Colonic mucosa (tissue), 4 donors: ENCODE measurements at regions of chr18 and their contacts with region 1.

Region 1: DNA sequence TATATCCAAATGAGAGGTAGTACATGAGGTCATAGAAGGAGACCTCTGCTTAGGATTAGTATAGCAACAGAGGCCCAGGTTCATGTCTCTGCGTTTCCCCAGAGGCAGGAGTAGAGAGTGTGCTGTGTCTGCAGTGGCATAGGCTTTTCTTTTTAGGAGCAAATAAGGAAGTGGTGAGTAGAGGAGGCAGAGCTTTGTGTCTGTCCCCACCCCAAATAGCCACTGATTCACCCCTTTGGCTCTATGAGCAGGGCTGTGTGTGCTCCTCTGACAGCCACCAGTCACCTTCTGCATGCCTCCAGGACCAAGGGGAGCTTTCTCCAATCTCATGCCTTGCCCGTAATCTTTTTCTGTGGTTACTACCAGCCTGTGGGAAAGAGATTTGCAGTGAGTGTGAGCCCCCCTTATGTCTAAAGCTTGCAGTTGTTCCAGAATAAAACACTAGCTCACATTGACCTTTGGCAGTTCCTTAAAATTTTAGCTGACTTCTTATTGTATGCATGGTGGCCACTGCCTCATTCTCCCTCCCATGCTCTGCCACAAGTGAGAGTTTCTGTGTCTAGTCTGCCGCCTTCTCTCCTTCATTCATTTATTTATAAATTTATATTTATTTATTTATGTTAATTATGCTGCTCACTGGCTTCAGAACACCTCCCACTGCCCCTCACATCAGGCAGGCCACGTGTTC is 23.5 kb upstream of the ELAC1 start:
- DNase-seq: no peak
- H3K4me3 ChIP-seq: no peak overlapping the region
- H3K27ac ChIP-seq: no peak overlapping the region
- H3K4me1 ChIP-seq: no peaks in the 10 kb centered on the region
- H3K27me3 ChIP-seq: no peaks in the 10 kb centered on the region
- CTCF ChIP-seq: no peak

Region 2: GRCh38 chr18:50879302-50880118 is 64.9 kb before region 1 on chr18:
- intact Hi-C with region 1: loop called (anchors 10 kb)
- DNase-seq: peak; percentile 53
- H3K4me3 ChIP-seq: peak overlapping the region; percentile 76
- H3K27ac ChIP-seq: peak overlapping the region; percentile 100
- H3K4me1 ChIP-seq: peaks cover 4% of the 10 kb centered on the region
- H3K27me3 ChIP-seq: no peaks in the 10 kb centered on the region
- CTCF ChIP-seq: no peak

Region 3: GRCh38 chr18:51290860-51291259 is 346.5 kb after region 1 on chr18:
- intact Hi-C with region 1: no loop called
- DNase-seq: no peak
- H3K4me3 ChIP-seq: no peak overlapping the region
- H3K27ac ChIP-seq: no peak overlapping the region
- H3K4me1 ChIP-seq: no peaks in the 10 kb centered on the region
- H3K27me3 ChIP-seq: no peaks in the 10 kb centered on the region
- CTCF ChIP-seq: no peak